CD14-positive monocyte (primary cell): ENCODE measurements at regions of chr1 and their contacts with region 1.

Region 1: GRCh38 chr1:197868751-197869489 is 33.5 kb upstream of the C1orf53 start:
- DNase-seq: peak; percentile 35 to 51 (median 37)
- H3K4me3 ChIP-seq: no peak overlapping the region
- H3K4me3 Mint-ChIP-seq: no peak overlapping the region
- H3K27ac ChIP-seq: no peak overlapping the region
- H3K27ac Mint-ChIP-seq: no peak overlapping the region
- H3K4me1 ChIP-seq: no peaks in the 10 kb centered on the region
- H3K4me1 Mint-ChIP-seq: no peaks in the 10 kb centered on the region
- H3K27me3 ChIP-seq: no peaks in the 10 kb centered on the region
- H3K27me3 Mint-ChIP-seq: peaks cover 0 to 1% (median 0%) of the 10 kb centered on the region in 3 donors
- CTCF ChIP-seq: peak; percentile 74

Region 2: DNA sequence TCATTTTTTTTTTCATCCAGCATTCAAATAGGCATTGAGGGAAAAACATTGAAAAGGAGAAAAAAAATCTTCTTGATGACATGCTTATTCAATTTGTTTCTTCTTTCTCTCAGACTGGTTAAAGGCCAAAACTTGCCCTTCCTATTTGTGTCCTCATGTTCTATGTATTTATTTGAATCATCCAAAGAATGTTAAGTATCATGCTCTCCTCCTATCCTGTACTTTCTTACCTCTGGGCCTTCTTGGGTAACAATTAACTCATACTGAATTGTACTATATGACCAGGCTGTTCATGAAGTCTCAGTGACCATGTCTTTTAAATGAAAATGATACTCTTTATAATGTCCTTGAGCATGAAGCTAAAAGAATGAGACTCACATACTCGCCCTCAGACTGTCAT is 57.2 kb before region 1 on chr1:
- intact Hi-C with region 1: loop called in 1 of 2 experiments (anchors 5 kb)
- DNase-seq: no peak
- H3K4me3 ChIP-seq: no peak overlapping the region
- H3K4me3 Mint-ChIP-seq: no peak overlapping the region
- H3K27ac ChIP-seq: no peak overlapping the region
- H3K27ac Mint-ChIP-seq: no peak overlapping the region
- H3K4me1 ChIP-seq: no peaks in the 10 kb centered on the region
- H3K4me1 Mint-ChIP-seq: no peaks in the 10 kb centered on the region
- H3K27me3 ChIP-seq: no peaks in the 10 kb centered on the region
- H3K27me3 Mint-ChIP-seq: peaks cover 0 to 2% (median 0%) of the 10 kb centered on the region in 3 donors
- CTCF ChIP-seq: no peak

Region 3: DNA sequence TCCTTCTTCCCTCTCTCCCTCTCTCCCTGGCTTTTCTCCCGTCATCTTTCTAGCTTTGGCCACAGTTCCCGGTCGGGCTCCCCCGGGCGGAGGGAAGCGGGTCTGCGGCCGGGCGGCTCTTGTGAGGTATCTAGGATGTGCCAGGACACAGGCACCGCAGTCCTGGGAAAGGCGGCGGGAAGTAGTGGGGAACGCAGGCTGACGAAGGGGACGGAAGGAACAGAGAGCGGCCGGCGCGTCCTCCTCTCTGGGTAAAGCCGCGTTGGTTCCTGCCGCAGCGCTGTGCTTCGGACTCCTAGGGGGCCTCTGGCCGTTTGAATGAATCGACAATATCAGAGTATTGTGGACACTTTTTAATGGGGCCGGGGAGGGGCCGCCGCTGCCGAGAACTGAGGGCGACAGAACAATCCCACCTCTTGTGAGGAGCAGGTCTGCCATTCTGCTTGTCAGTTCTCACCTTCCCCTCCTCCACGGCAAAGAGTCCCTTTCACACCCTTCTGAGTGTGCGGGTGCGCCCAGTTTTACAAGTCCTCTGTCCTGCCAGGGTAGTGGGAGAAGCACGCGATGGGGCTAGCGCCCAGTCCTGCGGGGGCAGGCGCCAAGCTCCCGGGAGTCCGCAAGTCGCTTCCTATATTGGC is 47.1 kb after region 1 on chr1:
- intact Hi-C with region 1: no loop called
- DNase-seq: peak in 1 of 3 donors; percentile 23
- H3K4me3 ChIP-seq: peak overlapping the region in 1 of 3 experiments; percentile 38
- H3K4me3 Mint-ChIP-seq: peak overlapping the region; percentile 49 to 97
- H3K27ac ChIP-seq: no peak overlapping the region
- H3K27ac Mint-ChIP-seq: peak overlapping the region in 1 of 7 donors; percentile 50
- H3K4me1 ChIP-seq: peaks cover 78 to 80% of the 10 kb centered on the region in 2 donors
- H3K4me1 Mint-ChIP-seq: peaks cover 89% of the 10 kb centered on the region
- H3K27me3 ChIP-seq: peaks cover 97 to 100% of the 10 kb centered on the region in 2 donors
- H3K27me3 Mint-ChIP-seq: peaks cover 99 to 100% (median 100%) of the 10 kb centered on the region in 3 donors
- CTCF ChIP-seq: peak; percentile 23